A673 (cell line): ENCODE measurements at regions of chr19 and their contacts with region 1.

Region 1: GRCh38 chr19:48454150-48454730 is 1.1 kb upstream of the KCNJ14 start:
- DNase-seq: no peak
- H3K4me3 ChIP-seq: no peak overlapping the region
- H3K27ac ChIP-seq: no peak overlapping the region
- H3K4me1 ChIP-seq: no peaks in the 10 kb centered on the region
- H3K27me3 ChIP-seq: no peaks in the 10 kb centered on the region
- CTCF ChIP-seq: no peak

Region 2: GRCh38 chr19:48379058-48379457 is 75.2 kb before region 1 on chr19:
- CTCF ChIA-PET with region 1: no interaction called
- POLR2A ChIA-PET with region 1: interaction called, 16 read pairs
- intact Hi-C with region 1: no loop called
- DNase-seq: no peak
- H3K4me3 ChIP-seq: no peak overlapping the region
- H3K27ac ChIP-seq: peak overlapping the region; percentile 32
- H3K4me1 ChIP-seq: no peaks in the 10 kb centered on the region
- H3K27me3 ChIP-seq: no peaks in the 10 kb centered on the region
- CTCF ChIP-seq: no peak